CD4-positive, alpha-beta T cell (primary cell): ENCODE measurements at regions of chrX and their contacts with region 1.

Region 1: DNA sequence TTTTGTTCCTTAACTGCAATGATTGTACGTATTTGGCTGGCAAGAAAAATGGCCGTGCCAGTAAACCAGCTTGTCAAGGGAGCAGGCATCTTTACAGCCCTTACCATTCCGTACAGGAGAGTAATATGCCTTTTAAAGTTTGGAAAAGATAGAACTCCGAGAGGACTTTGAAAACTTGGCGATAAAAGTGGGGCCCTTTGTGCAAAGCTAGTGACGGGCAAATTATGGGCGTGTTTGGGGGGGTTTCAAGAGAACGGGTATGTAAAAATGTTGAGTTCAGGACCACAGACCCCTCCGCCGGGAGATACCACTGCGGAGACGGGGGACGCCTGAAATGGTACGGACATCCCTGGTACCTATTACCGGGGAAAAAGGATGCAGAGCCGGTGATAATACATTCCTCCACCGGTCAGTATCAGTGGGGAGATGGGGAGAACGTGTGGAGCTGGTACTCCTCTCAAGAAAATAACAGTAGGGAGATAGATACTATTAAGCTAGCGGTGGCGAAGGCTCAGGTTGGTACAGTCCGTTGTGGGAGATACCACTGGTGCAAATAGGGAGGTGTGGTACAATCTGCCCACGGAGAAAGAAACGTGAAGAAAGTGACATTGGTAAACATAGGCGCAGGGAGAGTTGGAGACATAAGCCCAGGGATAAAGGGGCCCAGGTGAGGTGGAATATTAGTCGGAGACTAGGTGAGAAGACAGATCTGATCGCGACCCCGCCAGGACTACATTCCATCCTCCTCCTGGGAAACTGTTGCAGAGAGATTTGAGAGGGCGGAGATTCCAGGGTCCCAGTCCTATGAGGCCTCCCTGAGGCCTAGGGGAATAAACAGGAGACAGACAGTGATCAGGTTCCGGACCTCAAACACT is 14.5 kb downstream of the SPACA5 start:
- DNase-seq: peak; percentile 61 to 87 (median 76)
- ATAC-seq: peak; percentile 65
- H3K4me3 ChIP-seq: peak overlapping the region; percentile 77
- H3K4me3 Mint-ChIP-seq: peak overlapping the region; percentile 96
- H3K27ac ChIP-seq: peak overlapping the region; percentile 87 to 90
- H3K27ac Mint-ChIP-seq: peak overlapping the region; percentile 99
- H3K4me1 ChIP-seq: peaks cover 11% of the 10 kb centered on the region
- H3K4me1 Mint-ChIP-seq: peaks cover 20% of the 10 kb centered on the region
- H3K27me3 ChIP-seq: no peaks in the 10 kb centered on the region
- H3K27me3 Mint-ChIP-seq: no peaks in the 10 kb centered on the region
- CTCF ChIP-seq: no peak

Region 2: GRCh38 chrX:47166126-47166525 is 855.1 kb before region 1 on chrX:
- CTCF ChIA-PET with region 1: no interaction called
- POLR2A ChIA-PET with region 1: no interaction called
- intact Hi-C with region 1: no loop called
- DNase-seq: no peak
- ATAC-seq: no peak
- H3K4me3 ChIP-seq: no peak overlapping the region
- H3K4me3 Mint-ChIP-seq: no peak overlapping the region
- H3K27ac ChIP-seq: no peak overlapping the region
- H3K27ac Mint-ChIP-seq: no peak overlapping the region
- H3K4me1 ChIP-seq: no peaks in the 10 kb centered on the region
- H3K4me1 Mint-ChIP-seq: peaks cover 4% of the 10 kb centered on the region
- H3K27me3 ChIP-seq: no peaks in the 10 kb centered on the region
- H3K27me3 Mint-ChIP-seq: no peaks in the 10 kb centered on the region
- CTCF ChIP-seq: no peak

Region 3: DNA sequence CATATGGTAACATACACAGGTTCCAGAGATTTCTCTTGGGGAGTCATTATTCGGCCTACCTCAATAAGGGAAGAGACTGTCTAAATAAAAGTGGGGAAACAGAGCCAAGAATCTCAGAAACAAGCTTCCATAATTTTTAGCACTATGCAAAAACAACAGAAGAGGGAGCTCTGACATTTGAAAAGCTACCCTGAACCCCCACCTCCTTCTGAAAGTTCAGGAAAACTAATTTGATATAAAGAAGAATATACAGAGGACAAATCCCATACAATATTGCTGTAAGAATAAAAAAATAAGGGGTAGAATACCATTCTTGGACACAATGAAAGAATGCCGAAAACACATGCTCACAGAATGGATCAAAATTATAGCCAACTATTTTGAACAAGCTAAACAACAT is 524.0 kb before region 1 on chrX:
- CTCF ChIA-PET with region 1: no interaction called
- POLR2A ChIA-PET with region 1: no interaction called
- intact Hi-C with region 1: loop called in 1 of 2 experiments (anchors 10 kb)
- DNase-seq: peak in 3 of 14 experiments; percentile 15 to 21 (median 15)
- ATAC-seq: no peak
- H3K4me3 ChIP-seq: no peak overlapping the region
- H3K4me3 Mint-ChIP-seq: no peak overlapping the region
- H3K27ac ChIP-seq: no peak overlapping the region
- H3K27ac Mint-ChIP-seq: no peak overlapping the region
- H3K4me1 ChIP-seq: no peaks in the 10 kb centered on the region
- H3K4me1 Mint-ChIP-seq: no peaks in the 10 kb centered on the region
- H3K27me3 ChIP-seq: no peaks in the 10 kb centered on the region
- H3K27me3 Mint-ChIP-seq: no peaks in the 10 kb centered on the region
- CTCF ChIP-seq: peak; percentile 29

Region 4: GRCh38 chrX:47650164-47651042 is 370.9 kb before region 1 on chrX and contains the start of gene ELK1:
- CTCF ChIA-PET with region 1: no interaction called
- POLR2A ChIA-PET with region 1: no interaction called
- intact Hi-C with region 1: loop called (anchors 10 kb)
- DNase-seq: peak; percentile 75 to 96 (median 84)
- ATAC-seq: peak; percentile 88
- H3K4me3 ChIP-seq: peak within 1 kb of the TSS; percentile 83
- H3K4me3 Mint-ChIP-seq: peak within 1 kb of the TSS; percentile 94
- H3K27ac ChIP-seq: peak within 1 kb of the TSS; percentile 65 to 76
- H3K27ac Mint-ChIP-seq: peak within 1 kb of the TSS; percentile 89
- H3K4me1 ChIP-seq: peaks cover 29% of the 10 kb centered on the region
- H3K4me1 Mint-ChIP-seq: peaks cover 39% of the 10 kb centered on the region
- H3K27me3 ChIP-seq: no peaks in the 10 kb centered on the region
- H3K27me3 Mint-ChIP-seq: no peaks in the 10 kb centered on the region
- CTCF ChIP-seq: no peak
- total RNA-seq, gene ELK1: 38.9 to 40.5 TPM

Region 5: DNA sequence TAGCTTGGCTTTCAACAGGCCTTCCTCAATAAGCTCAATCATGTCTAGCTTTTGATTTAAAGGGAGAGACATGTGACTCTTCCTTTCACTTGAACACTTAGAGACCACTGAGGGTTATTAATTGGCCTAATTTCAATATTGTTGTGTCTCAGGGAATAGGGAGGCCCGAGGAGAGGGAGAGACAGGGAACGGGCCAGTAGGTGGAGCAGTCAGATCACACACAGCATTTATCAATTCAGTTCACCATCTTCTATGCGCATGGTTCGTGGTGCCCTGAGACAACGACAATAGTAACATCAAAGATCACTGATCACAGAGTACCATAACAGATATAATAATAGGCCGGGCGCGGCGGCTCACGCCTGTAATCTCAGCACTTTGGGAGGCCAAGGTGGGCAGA is 166.8 kb before region 1 on chrX:
- CTCF ChIA-PET with region 1: no interaction called
- POLR2A ChIA-PET with region 1: no interaction called
- intact Hi-C with region 1: loop called in 1 of 2 experiments (anchors 1 kb)
- DNase-seq: peak in 13 of 14 experiments; percentile 1 to 55 (median 15)
- ATAC-seq: peak; percentile 76
- H3K4me3 ChIP-seq: no peak overlapping the region
- H3K4me3 Mint-ChIP-seq: no peak overlapping the region
- H3K27ac ChIP-seq: no peak overlapping the region
- H3K27ac Mint-ChIP-seq: no peak overlapping the region
- H3K4me1 ChIP-seq: no peaks in the 10 kb centered on the region
- H3K4me1 Mint-ChIP-seq: no peaks in the 10 kb centered on the region
- H3K27me3 ChIP-seq: no peaks in the 10 kb centered on the region
- H3K27me3 Mint-ChIP-seq: no peaks in the 10 kb centered on the region
- CTCF ChIP-seq: no peak

Region 6: GRCh38 chrX:48143646-48144045 is 122.4 kb after region 1 on chrX:
- CTCF ChIA-PET with region 1: no interaction called
- POLR2A ChIA-PET with region 1: no interaction called
- intact Hi-C with region 1: loop called in 1 of 2 experiments (anchors 10 kb)
- DNase-seq: no peak
- ATAC-seq: no peak
- H3K4me3 ChIP-seq: no peak overlapping the region
- H3K4me3 Mint-ChIP-seq: no peak overlapping the region
- H3K27ac ChIP-seq: no peak overlapping the region
- H3K27ac Mint-ChIP-seq: no peak overlapping the region
- H3K4me1 ChIP-seq: peaks cover 3% of the 10 kb centered on the region
- H3K4me1 Mint-ChIP-seq: peaks cover 22% of the 10 kb centered on the region
- H3K27me3 ChIP-seq: no peaks in the 10 kb centered on the region
- H3K27me3 Mint-ChIP-seq: no peaks in the 10 kb centered on the region
- CTCF ChIP-seq: no peak

Region 7: GRCh38 chrX:49043220-49043986 is 1022.1 kb after region 1 on chrX and contains the start of gene TFE3:
- CTCF ChIA-PET with region 1: no interaction called
- POLR2A ChIA-PET with region 1: no interaction called
- intact Hi-C with region 1: no loop called
- DNase-seq: peak; percentile 87 to 99 (median 93)
- ATAC-seq: peak; percentile 86
- H3K4me3 ChIP-seq: peak within 1 kb of the TSS; percentile 66
- H3K4me3 Mint-ChIP-seq: peak within 1 kb of the TSS; percentile 96
- H3K27ac ChIP-seq: peak within 1 kb of the TSS; percentile 84 to 88
- H3K27ac Mint-ChIP-seq: peak within 1 kb of the TSS; percentile 94
- H3K4me1 ChIP-seq: peaks cover 42% of the 10 kb centered on the region
- H3K4me1 Mint-ChIP-seq: peaks cover 39% of the 10 kb centered on the region
- H3K27me3 ChIP-seq: no peaks in the 10 kb centered on the region
- H3K27me3 Mint-ChIP-seq: no peaks in the 10 kb centered on the region
- CTCF ChIP-seq: peak; percentile 41
- total RNA-seq, gene TFE3: 38.6 to 40.9 TPM